ENCODE measurements at regions of chr16 and their contacts with region 1.

Region 1: DNA sequence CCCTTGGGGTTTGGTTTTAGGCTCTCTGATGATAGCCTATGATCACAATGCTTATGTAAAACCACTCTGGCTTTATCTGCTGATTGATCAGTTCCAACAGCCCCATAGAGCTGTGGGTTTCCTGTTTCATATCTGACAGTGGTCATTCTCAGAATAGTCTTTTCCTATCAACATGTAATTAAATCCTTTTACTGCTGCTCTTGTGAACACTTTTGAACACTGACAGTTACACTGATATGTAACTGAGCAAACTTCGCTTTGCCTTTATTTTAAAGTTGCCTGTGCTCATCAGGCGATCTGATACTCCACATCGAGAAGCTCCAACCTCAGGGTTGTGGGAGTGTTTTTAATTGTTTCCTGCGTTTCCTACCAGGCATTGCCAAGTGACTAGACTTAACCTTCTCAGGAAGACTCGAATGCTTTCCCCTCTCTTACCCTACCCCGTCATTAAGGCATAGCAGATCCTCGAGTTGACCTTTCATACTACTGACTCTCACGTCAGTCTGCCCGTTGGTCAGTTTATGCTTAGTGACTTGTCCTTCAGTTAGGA is 17.3 kb upstream of the CLEC18B start:
- DNase-seq: no peak
- ATAC-seq: no peak
- H3K4me3 ChIP-seq: no peak overlapping the region
- H3K27ac ChIP-seq: no peak overlapping the region
- H3K4me1 ChIP-seq: no peaks in the 10 kb centered on the region
- H3K27me3 ChIP-seq: no peaks in the 10 kb centered on the region
- CTCF ChIP-seq: no peak
- EP300 ChIP-seq: no peak
- POLR2A ChIP-seq: no peak
- RAD21 ChIP-seq: no peak

Region 2: GRCh38 chr16:74315059-74315458 is 123.5 kb before region 1 on chr16:
- CTCF ChIA-PET with region 1: no interaction called
- POLR2A ChIA-PET with region 1: no interaction called
- in situ Hi-C with region 1: no loop called
- intact Hi-C with region 1: no loop called
- DNase-seq: no peak
- ATAC-seq: no peak; the same call in 2 of the 3 replicates
- H3K4me3 ChIP-seq: no peak overlapping the region
- H3K27ac ChIP-seq: no peak overlapping the region
- H3K4me1 ChIP-seq: no peaks in the 10 kb centered on the region
- H3K27me3 ChIP-seq: no peaks in the 10 kb centered on the region
- CTCF ChIP-seq: no peak
- EP300 ChIP-seq: no peak
- POLR2A ChIP-seq: no peak
- RAD21 ChIP-seq: no peak

Region 3: GRCh38 chr16:74372953-74373846 is 65.4 kb before region 1 on chr16:
- CTCF ChIA-PET with region 1: no interaction called
- POLR2A ChIA-PET with region 1: no interaction called
- in situ Hi-C with region 1: no loop called
- intact Hi-C with region 1: loop called (anchors 10 kb)
- DNase-seq: no peak
- ATAC-seq: no peak
- H3K4me3 ChIP-seq: no peak overlapping the region
- H3K27ac ChIP-seq: no peak overlapping the region
- H3K4me1 ChIP-seq: no peaks in the 10 kb centered on the region
- H3K27me3 ChIP-seq: peaks cover 0 to 1% of the 10 kb centered on the region in 2 experiments; a peak in 1 of 5 replicates
- CTCF ChIP-seq: no peak
- EP300 ChIP-seq: no peak
- POLR2A ChIP-seq: no peak
- RAD21 ChIP-seq: no peak

Measured in HepG2 (cell line).